ENCODE measurements at regions of chr3 and their contacts with region 1.

Region 1: GRCh38 chr3:170405101-170405500 is 13.6 kb upstream of the CLDN11 start:
- DNase-seq: no peak
- H3K4me3 ChIP-seq: no peak overlapping the region
- H3K27ac ChIP-seq: no peak overlapping the region
- H3K4me1 ChIP-seq: no peaks in the 10 kb centered on the region
- H3K27me3 ChIP-seq: no peaks in the 10 kb centered on the region
- CTCF ChIP-seq: no peak

Region 2: GRCh38 chr3:170317954-170318353 is 87.1 kb before region 1 on chr3:
- CTCF ChIA-PET with region 1: no interaction called
- dilution Hi-C with region 1: no loop called
- in situ Hi-C with region 1: loop called in 1 of 2 experiments (anchors 10 kb)
- intact Hi-C with region 1: no loop called
- DNase-seq: no peak
- H3K4me3 ChIP-seq: no peak overlapping the region
- H3K27ac ChIP-seq: no peak overlapping the region
- H3K4me1 ChIP-seq: no peaks in the 10 kb centered on the region
- H3K27me3 ChIP-seq: no peaks in the 10 kb centered on the region
- CTCF ChIP-seq: no peak

Region 3: DNA sequence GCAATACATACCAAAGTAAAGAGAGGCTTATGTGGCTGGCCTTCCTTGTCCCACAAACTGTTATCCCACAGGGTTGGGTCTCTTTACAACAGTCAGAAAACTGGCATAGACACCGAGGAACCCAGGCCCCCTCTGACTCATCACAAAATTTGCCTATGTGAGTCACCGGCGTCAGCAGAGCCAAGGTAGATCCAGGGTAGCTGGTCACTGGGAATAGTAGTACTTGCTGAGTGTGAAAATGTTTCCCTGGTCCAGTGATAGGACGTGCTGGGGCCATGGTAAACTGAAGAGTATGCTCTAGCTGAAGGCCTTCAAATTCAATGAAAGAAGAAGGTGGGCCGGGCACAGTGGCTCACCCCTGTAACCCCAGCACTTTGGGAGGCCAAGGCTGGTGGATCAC is 74.7 kb before region 1 on chr3:
- CTCF ChIA-PET with region 1: no interaction called
- dilution Hi-C with region 1: no loop called
- in situ Hi-C with region 1: no loop called
- intact Hi-C with region 1: no loop called
- DNase-seq: peak; percentile 45
- H3K4me3 ChIP-seq: no peak overlapping the region
- H3K27ac ChIP-seq: no peak overlapping the region
- H3K4me1 ChIP-seq: no peaks in the 10 kb centered on the region
- H3K27me3 ChIP-seq: no peaks in the 10 kb centered on the region
- CTCF ChIP-seq: no peak

Region 4: GRCh38 chr3:170835336-170835735 is 430.2 kb after region 1 on chr3:
- CTCF ChIA-PET with region 1: no interaction called
- dilution Hi-C with region 1: loop called (anchors 10 kb)
- in situ Hi-C with region 1: no loop called
- intact Hi-C with region 1: no loop called
- DNase-seq: no peak
- H3K4me3 ChIP-seq: no peak overlapping the region
- H3K27ac ChIP-seq: no peak overlapping the region
- H3K4me1 ChIP-seq: no peaks in the 10 kb centered on the region
- H3K27me3 ChIP-seq: no peaks in the 10 kb centered on the region
- CTCF ChIP-seq: no peak

Measured in mammary epithelial cell (primary cell).